Thyroid gland (tissue), 4 donors: ENCODE measurements at regions of chr6 and their contacts with region 1.

Region 1: DNA sequence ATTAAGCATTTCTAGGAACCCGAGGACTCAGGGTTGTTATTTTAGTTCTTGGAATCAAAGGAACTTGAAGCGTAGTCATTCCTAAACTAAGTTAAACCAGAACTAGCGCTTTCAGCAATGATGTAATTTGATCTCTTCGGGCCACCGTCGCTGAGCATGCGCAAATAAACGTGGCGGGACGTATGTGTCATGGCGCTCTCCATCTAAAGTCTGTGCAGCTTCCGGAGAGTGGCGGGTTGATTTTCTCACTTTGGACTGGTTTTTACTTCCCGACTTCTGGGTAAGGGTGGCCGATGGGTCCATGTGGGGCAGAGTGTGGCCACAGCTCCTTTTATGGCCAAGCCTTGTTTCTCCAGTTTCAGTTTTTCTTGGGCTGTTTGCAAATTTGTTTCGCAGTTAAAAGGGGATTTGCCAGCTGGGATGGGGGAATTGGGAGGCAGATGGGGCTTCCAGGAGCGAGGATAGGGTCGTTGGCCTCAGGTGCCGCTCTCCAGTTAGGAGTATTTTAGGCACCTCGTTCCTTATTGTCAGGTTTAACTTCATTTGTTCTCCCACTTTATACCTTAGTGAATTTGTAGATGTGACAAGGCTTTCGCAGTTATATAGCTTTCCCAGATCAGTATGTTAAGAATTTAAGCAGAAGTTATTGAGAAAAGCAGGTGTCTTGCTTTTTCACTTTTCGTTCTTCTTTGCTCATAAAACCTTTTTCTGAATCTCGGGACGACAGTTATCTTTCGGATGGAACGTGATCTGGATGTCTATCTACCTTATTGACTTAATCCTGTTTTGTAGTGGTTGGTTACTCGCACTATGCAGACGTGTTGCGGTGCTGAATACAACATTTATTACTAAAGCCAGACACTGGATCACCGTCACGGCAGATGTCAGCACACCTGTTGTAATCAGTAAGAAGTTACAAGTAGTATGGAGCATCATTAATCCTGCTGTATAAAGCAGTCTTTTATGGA is at the start of gene CDKAL1:
- DNase-seq: peak; percentile 90 to 92
- H3K4me3 ChIP-seq: peak within 1 kb of the TSS; percentile 3 to 87 (median 50)
- H3K27ac ChIP-seq: peak within 1 kb of the TSS; percentile 58 to 89 (median 74)
- H3K4me1 ChIP-seq: peaks cover 17 to 27% of the 10 kb centered on the region in 2 donors
- H3K27me3 ChIP-seq: no peaks in the 10 kb centered on the region
- CTCF ChIP-seq: peak in 1 of 6 experiments; percentile 3
- POLR2A ChIP-seq: peak in 1 of 2 donors; percentile 63
- total RNA-seq, gene CDKAL1: 24.7 to 32.8 (median 29.8) TPM

Region 2: GRCh38 chr6:20291764-20292580 is 242.6 kb before region 1 on chr6:
- intact Hi-C with region 1: loop called (anchors 5 kb)
- DNase-seq: peak; percentile 86 to 87
- H3K4me3 ChIP-seq: no peak overlapping the region
- H3K27ac ChIP-seq: no peak overlapping the region
- H3K4me1 ChIP-seq: no peaks in the 10 kb centered on the region
- H3K27me3 ChIP-seq: no peaks in the 10 kb centered on the region
- CTCF ChIP-seq: peak; percentile 68 to 95 (median 86)
- POLR2A ChIP-seq: no peak